Lower lobe of right lung (tissue), 2 donors: ENCODE measurements at regions of chr9 and their contacts with region 1.

Region 1: GRCh38 chr9:128863647-128864046 is 18.1 kb downstream of the KYAT1 start:
- DNase-seq: peak; percentile 87
- ATAC-seq: peak; percentile 89 to 92
- H3K4me3 ChIP-seq: no peak overlapping the region
- H3K27ac ChIP-seq: peak overlapping the region; percentile 48
- H3K4me1 ChIP-seq: peaks cover 12% of the 10 kb centered on the region
- H3K27me3 ChIP-seq: no peaks in the 10 kb centered on the region
- CTCF ChIP-seq: peak; percentile 99

Region 2: GRCh38 chr9:128927731-128928411 is 64.2 kb after region 1 on chr9:
- intact Hi-C with region 1: loop called (anchors 10 kb)
- DNase-seq: peak; percentile 59
- ATAC-seq: peak; percentile 82 to 88
- H3K4me3 ChIP-seq: no peak overlapping the region
- H3K27ac ChIP-seq: peak overlapping the region; percentile 31
- H3K4me1 ChIP-seq: peaks cover 17% of the 10 kb centered on the region
- H3K27me3 ChIP-seq: no peaks in the 10 kb centered on the region
- CTCF ChIP-seq: peak; percentile 81

Region 3: DNA sequence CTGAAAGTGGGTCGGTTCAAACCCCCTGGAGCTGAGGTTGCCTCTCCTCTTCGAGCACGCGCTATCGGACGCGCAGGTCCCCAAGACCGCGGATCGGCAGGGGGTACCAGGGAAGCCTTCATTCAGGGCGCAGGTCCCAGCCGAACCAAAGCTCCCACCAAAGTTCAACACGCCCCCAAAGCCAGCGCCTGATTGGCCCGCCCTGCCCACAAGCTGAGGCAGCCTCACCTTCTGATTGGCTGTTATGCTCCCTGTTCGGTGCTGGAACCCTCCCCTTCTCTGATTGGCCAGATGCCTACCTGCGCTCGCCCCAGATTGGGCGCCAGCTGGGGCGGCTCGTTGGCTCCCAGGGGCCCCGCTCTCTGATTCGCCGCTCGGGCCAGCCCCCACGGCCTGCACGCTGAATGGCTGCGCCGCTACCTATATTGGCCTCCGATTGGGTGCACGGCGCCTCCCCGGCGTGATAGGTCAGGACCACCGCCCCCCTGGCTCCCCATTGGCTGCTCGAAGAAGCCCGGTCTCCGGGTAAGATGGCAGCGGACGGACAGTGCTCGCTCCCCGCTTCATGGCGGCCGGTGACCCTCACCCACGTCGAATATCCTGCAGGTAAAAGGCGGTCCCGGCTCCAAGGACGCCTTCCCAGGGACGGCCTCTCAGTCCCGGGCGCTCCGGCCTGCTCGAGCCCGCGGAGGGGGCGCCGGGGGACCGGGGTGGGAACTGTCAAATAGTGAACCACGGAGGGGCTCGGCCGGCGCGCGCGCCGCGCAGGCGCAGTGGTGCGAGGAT is 217.1 kb after region 1 on chr9 and contains the start of gene DOLPP1:
- intact Hi-C with region 1: no loop called
- DNase-seq: peak; percentile 100
- ATAC-seq: peak; percentile 99
- H3K4me3 ChIP-seq: peak within 1 kb of the TSS; percentile 97
- H3K27ac ChIP-seq: peak within 1 kb of the TSS; percentile 84
- H3K4me1 ChIP-seq: peaks cover 19% of the 10 kb centered on the region
- H3K27me3 ChIP-seq: no peaks in the 10 kb centered on the region
- CTCF ChIP-seq: no peak
- total RNA-seq, gene DOLPP1: 9.5 TPM